HepG2 (cell line): ENCODE measurements at regions of chr10 and their contacts with region 1.

Region 1: DNA sequence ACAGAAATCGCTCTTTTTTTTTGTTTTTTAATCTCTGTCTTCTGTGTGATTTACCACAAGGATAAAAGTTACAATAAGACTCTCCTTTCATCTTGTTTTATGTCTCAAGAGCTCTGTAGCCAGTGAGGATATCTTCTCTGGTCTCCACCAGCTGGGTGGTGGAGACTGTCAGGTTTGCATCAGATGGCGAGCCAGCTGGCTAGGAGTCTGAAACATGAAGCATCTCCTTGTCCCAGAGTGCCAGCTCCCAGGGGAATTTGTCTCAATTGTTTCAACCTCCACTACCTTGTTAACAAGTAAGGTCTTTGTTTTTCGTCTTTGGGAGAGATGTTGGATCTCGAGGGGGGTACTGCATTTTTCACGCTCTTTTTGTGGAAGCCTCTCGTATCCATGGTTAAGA is 47.3 kb downstream of the FRMPD2 start:
- DNase-seq: no peak
- ATAC-seq: no peak
- H3K4me3 ChIP-seq: no peak overlapping the region
- H3K27ac ChIP-seq: no peak overlapping the region
- H3K4me1 ChIP-seq: no peaks in the 10 kb centered on the region
- H3K27me3 ChIP-seq: no peaks in the 10 kb centered on the region; a peak in 1 of 5 replicates
- CTCF ChIP-seq: no peak
- EP300 ChIP-seq: no peak
- POLR2A ChIP-seq: no peak
- RAD21 ChIP-seq: no peak

Region 2: DNA sequence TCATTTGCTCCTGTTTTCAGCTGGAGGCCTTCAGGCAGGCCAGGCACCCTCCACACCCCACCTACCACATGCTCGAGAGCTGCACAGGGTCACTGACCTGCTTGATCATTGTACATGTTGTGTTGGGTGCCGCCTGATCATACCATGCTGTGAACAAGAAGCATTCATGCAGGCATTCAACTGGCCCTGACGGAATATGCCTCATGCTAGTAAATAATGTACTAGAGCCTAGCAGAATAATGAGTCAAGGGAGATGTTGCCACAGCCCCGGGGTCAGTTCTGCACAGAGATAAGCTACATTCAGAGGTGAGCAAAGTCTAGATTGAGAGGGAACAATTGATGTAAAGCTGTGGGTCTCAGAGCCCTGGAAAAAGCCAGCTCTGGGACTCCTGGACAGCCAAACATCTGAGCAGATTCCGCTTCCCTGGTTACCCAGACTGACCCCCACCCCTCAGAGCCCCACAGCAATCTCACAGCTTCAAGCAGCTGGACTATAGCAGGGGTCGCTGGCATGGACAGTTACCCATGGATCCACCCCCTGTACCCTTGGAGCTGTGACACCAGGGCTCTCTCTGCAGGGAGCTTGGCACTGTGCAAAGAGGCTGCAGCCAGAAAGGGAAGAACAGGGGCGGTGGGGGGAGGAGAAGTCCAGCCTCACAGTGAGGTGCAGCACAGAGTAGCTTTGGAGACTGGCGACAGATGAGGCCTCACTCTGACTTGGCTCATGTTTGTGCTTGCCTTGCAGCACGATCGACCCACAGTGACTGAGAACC is 39.3 kb before region 1 on chr10:
- CTCF ChIA-PET with region 1: no interaction called
- POLR2A ChIA-PET with region 1: no interaction called
- in situ Hi-C with region 1: no loop called
- intact Hi-C with region 1: loop called (anchors 1 kb)
- DNase-seq: peak; percentile 76
- ATAC-seq: peak; percentile 94
- H3K4me3 ChIP-seq: peak overlapping the region in 1 of 3 experiments; percentile 56; a peak in 2 of 6 replicates
- H3K27ac ChIP-seq: peak overlapping the region; percentile 71
- H3K4me1 ChIP-seq: peaks cover 33% of the 10 kb centered on the region
- H3K27me3 ChIP-seq: no peaks in the 10 kb centered on the region
- CTCF ChIP-seq: no peak
- EP300 ChIP-seq: no peak
- POLR2A ChIP-seq: no peak
- RAD21 ChIP-seq: no peak

Region 3: DNA sequence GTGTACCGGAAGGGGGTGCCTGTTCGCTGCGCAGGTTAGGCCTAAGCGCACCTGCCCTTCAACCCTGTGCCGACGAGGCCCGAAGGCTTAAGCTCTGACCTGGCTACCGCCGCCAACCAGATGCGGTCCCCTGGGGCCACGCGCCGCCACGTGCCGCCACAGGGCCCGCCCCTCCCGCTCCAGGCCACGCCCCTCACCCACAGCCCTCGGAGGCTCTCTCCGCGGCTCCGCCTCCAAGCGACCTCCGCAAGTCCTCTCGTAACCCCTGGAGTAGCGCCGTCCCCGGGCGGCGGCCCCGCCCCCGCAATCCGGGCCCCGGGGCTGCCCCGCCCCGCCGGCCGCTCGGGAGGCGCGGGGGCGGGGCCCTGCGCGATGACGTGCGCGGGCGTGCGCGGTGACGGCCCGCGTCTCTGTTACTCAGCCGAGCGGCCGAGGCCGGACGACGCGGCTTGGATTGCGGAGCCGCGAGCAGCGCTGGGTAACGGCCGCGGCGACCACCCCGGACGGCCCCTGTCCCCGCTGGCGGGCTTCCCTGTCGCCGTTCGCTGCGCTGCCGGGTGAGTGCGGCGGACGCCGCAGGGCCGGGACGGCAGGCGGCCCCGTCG is 79.2 kb after region 1 on chr10 and contains the start of gene MAPK8:
- CTCF ChIA-PET with region 1: no interaction called
- POLR2A ChIA-PET with region 1: no interaction called
- in situ Hi-C with region 1: no loop called
- intact Hi-C with region 1: no loop called
- DNase-seq: peak; percentile 83
- ATAC-seq: peak; percentile 89
- H3K4me3 ChIP-seq: peak within 1 kb of the TSS; percentile 82 to 95 (median 83)
- H3K27ac ChIP-seq: peak within 1 kb of the TSS; percentile 87
- H3K4me1 ChIP-seq: peaks cover 30% of the 10 kb centered on the region
- H3K27me3 ChIP-seq: no peaks in the 10 kb centered on the region; a peak in 2 of 5 replicates
- CTCF ChIP-seq: no peak
- EP300 ChIP-seq: no peak
- POLR2A ChIP-seq: peak; percentile 82 to 85
- RAD21 ChIP-seq: peak; percentile 9; the same call in 1 of the 2 replicates
- total RNA-seq, gene MAPK8: 47.3 and 64.5 TPM in 2 replicates

Region 4: DNA sequence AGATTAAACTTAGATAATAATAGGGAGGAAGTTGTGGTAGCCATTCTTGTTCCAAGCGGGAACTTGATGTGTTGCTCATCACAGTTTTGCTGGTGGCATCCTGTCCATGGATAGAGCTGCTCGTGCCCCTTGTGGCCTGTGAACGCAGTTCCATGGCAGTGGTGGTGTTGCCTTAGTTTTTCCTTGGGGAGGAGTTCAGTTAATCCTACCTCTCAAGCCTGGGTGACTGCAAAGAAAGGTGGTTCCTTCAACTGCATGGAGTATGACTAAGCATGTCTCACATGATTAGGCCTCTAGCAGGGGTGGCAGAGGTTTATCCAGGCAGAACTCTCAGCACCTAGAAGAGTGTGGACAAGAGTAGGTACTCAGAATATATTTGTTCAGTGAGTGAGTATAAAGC is 179.0 kb after region 1 on chr10:
- CTCF ChIA-PET with region 1: no interaction called
- POLR2A ChIA-PET with region 1: no interaction called
- in situ Hi-C with region 1: no loop called
- intact Hi-C with region 1: no loop called
- DNase-seq: no peak
- ATAC-seq: no peak
- H3K4me3 ChIP-seq: no peak overlapping the region
- H3K27ac ChIP-seq: no peak overlapping the region
- H3K4me1 ChIP-seq: no peaks in the 10 kb centered on the region
- H3K27me3 ChIP-seq: no peaks in the 10 kb centered on the region
- CTCF ChIP-seq: no peak
- EP300 ChIP-seq: no peak
- POLR2A ChIP-seq: no peak
- RAD21 ChIP-seq: no peak

Region 5: GRCh38 chr10:48634198-48634983 is 407.2 kb after region 1 on chr10:
- CTCF ChIA-PET with region 1: no interaction called
- POLR2A ChIA-PET with region 1: no interaction called
- in situ Hi-C with region 1: no loop called
- intact Hi-C with region 1: no loop called
- DNase-seq: no peak
- ATAC-seq: no peak
- H3K4me3 ChIP-seq: no peak overlapping the region
- H3K27ac ChIP-seq: no peak overlapping the region
- H3K4me1 ChIP-seq: no peaks in the 10 kb centered on the region
- H3K27me3 ChIP-seq: peaks cover 2% of the 10 kb centered on the region in 2 experiments; a peak in 1 of 5 replicates
- CTCF ChIP-seq: no peak
- EP300 ChIP-seq: no peak
- POLR2A ChIP-seq: no peak
- RAD21 ChIP-seq: no peak